Activated T-helper 1 cell treated with anti-CD3 and anti-CD28 coated beads, Interleukin-12 subunit alpha, Interleukin-12 subunit beta, Interleukin-2, Interleukin-4 antibody, amounts not matched to agents 30 ng/mL and 10 ng/mL and 1 ng/mL, durations not matched to agents 14 hours and 24 hours and 36 hours (primary cell): ENCODE measurements at regions of chr16 and their contacts with region 1.

Region 1: DNA sequence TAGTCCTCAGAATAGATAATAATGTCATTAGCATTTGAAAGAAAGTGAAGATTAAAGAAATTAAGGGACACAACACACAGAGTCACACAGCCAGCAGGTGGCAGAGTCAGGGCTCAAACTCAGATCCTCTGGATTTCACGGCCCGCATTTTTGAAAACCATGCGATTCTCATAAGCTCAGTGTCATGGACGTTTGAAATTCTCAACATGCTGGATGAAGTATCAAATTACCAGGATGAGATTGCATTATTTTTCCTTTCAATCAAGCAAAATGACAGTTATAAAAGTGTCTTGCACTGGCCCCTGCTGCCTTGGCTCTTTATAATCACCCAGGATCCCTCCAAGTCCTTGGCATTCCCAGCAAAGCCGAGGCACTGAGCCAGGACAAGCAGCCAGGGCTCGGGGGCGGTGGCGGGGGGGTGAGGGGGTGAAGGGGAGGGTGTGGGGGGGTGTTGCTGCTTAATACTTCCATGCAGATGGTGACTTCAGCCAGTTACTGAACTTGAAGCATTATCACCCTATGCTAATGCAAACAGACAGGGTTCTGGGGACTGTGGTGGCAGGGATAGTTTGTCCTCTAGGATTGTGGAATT is 6.6 kb upstream of the BMERB1 start:
- DNase-seq: peak; percentile 22
- H3K4me3 Mint-ChIP-seq: no peak overlapping the region
- H3K27ac Mint-ChIP-seq: no peak overlapping the region
- H3K4me1 Mint-ChIP-seq: no peaks in the 10 kb centered on the region
- H3K27me3 Mint-ChIP-seq: peaks cover 2% of the 10 kb centered on the region

Region 2: DNA sequence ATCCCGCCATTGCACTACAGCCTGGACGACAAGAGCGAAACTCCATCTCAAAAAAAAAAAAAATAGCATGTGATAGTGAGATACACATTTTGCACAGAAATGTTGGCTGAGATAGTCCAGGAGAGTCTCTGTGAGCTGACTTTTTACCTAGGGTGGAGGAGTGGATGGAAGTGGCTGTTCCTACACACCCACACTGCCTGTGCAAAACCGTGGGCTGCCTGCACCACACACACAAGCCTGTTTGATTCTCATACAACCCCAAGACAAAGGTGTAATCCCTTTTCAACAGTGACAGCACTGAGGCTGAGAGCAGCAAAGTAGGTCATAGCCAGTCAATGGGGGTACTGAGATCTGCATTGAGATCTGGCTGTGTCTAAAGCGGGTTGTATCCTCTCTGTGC is 128.4 kb after region 1 on chr16:
- intact Hi-C with region 1: loop called (anchors 2 kb)
- DNase-seq: no peak
- H3K4me3 Mint-ChIP-seq: no peak overlapping the region
- H3K27ac Mint-ChIP-seq: peak overlapping the region; percentile 23
- H3K4me1 Mint-ChIP-seq: peaks cover 31% of the 10 kb centered on the region
- H3K27me3 Mint-ChIP-seq: no peaks in the 10 kb centered on the region

Region 3: DNA sequence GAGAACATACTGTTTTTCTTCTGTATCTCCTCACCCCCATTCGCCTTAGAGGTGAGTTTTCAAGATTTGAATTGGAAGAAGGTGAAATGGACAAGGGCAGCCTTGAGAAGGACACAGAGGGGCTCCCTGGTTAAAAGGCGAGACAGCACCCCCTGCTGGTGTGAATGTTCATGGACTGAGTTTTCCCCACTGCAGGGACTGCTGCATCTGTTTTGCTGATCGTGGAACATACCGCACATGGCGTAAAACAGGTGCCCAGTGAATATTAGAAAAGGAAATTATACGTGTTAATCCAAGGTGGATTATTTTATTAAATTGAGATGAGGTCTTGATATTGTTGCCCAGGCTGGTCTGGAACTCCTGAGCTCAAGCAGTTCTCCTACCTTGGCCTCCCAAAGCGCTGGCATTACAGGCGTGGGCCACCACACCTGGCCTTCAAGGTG is 276.8 kb after region 1 on chr16:
- intact Hi-C with region 1: loop called (anchors 1 kb)
- DNase-seq: peak; percentile 54
- H3K4me3 Mint-ChIP-seq: no peak overlapping the region
- H3K27ac Mint-ChIP-seq: peak overlapping the region; percentile 27
- H3K4me1 Mint-ChIP-seq: peaks cover 22% of the 10 kb centered on the region
- H3K27me3 Mint-ChIP-seq: no peaks in the 10 kb centered on the region